ENCODE measurements at regions of chr3 and their contacts with region 1.

Region 1: GRCh38 chr3:122322095-122323075 is 2.7 kb upstream of the CSTA start:
- DNase-seq: peak; percentile 87
- H3K4me3 Mint-ChIP-seq: peak overlapping the region; percentile 24
- H3K27ac Mint-ChIP-seq: peak overlapping the region; percentile 73
- H3K4me1 Mint-ChIP-seq: peaks cover 24% of the 10 kb centered on the region
- H3K27me3 Mint-ChIP-seq: peaks cover 2% of the 10 kb centered on the region

Region 2: DNA sequence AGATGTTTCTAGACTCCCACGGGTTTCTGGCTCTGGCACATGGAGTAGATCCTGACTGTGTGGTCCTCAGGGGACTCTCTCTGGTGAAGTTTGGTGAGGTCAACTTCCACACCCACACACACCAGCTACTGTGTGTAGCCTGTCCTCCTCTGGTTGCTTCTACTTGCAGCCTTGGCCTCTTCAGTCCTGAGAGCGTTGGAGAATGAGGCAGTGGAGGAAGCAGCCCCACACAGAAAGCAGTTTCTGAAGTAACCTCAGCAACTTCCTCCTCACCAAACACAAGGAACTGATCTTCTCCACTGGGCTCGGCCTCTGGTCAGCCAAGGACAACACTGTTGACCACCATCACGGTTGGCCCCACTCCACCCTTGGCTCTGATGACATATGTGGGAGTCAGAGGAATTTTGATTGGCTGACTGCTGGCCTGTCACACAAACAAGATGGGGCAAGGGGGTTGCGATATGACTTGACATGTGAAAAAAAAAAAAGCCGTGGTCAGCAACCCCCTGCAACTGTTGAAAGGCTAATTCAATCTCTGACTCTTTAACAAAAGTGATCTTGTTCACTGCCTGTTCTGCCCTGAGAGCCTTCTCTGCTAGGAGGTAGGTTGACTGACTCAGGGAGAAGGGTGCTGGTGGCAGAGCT is 247.6 kb before region 1 on chr3:
- intact Hi-C with region 1: no loop called
- DNase-seq: peak; percentile 78
- H3K4me3 Mint-ChIP-seq: peak overlapping the region; percentile 53
- H3K27ac Mint-ChIP-seq: peak overlapping the region; percentile 76
- H3K4me1 Mint-ChIP-seq: peaks cover 35% of the 10 kb centered on the region
- H3K27me3 Mint-ChIP-seq: no peaks in the 10 kb centered on the region

Region 3: DNA sequence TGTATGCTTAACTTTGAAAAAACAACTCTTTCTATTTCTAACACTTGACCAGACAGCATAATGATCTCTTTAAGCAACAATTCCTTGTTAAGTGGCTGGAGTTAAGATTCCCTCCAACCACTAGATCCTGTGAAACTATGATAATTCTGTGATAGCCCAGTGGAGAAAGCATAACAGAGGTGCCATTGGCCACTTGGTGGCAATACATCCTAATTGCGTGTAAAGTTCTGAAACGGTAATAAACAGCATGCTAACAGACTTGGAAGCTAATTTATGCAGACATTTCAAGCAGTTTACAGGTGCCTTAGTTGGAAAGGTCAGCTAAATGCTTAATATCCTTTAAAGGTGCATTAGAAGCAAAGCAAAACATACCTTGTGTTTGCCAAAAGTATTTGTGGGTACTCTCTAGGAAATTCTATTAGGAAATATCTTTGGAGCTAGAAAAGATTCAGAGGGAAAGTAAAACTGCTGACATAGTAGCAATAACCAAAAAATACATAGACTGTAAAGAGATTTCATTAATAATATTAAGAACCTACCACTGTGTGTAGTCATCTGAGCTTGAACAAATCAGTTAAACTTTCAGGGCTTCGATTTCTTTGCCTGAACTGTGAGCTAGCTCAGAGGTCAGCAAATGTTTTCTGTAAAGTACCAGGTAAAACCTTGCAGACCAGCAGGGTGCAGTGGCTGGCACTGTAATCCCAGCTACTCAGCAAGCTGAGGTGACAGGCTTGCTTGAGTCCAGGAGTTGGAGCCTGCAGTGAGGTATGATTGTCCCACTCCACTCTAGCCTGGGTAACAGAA is 16.4 kb before region 1 on chr3:
- intact Hi-C with region 1: no loop called
- DNase-seq: peak; percentile 54
- H3K4me3 Mint-ChIP-seq: no peak overlapping the region
- H3K27ac Mint-ChIP-seq: no peak overlapping the region
- H3K4me1 Mint-ChIP-seq: peaks cover 2% of the 10 kb centered on the region
- H3K27me3 Mint-ChIP-seq: peaks cover 5% of the 10 kb centered on the region

Region 4: DNA sequence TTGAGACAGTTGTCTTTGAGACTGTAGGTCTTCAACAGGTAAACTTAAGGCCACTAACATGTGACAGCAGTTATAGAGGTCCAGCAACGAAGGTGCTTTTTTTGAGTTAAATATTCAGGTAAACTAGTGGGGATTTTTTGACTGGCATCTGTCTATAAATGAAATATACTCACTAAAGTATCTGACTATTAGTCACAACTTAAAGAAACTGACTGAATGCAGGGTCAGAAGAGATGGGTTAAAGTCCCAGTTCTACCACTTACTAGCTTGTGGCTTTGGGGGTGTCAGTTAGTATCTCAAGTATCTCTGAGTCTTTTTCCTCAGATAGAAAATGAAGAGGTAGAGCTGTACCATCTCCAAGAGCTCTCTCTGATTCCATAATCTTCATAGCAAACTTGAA is 42.7 kb after region 1 on chr3:
- intact Hi-C with region 1: loop called (anchors 1 kb)
- DNase-seq: no peak
- H3K4me3 Mint-ChIP-seq: peak overlapping the region; percentile 30
- H3K27ac Mint-ChIP-seq: peak overlapping the region; percentile 95
- H3K4me1 Mint-ChIP-seq: peaks cover 33% of the 10 kb centered on the region
- H3K27me3 Mint-ChIP-seq: no peaks in the 10 kb centered on the region